ENCODE measurements at regions of chr6 and their contacts with region 1.

Region 1: DNA sequence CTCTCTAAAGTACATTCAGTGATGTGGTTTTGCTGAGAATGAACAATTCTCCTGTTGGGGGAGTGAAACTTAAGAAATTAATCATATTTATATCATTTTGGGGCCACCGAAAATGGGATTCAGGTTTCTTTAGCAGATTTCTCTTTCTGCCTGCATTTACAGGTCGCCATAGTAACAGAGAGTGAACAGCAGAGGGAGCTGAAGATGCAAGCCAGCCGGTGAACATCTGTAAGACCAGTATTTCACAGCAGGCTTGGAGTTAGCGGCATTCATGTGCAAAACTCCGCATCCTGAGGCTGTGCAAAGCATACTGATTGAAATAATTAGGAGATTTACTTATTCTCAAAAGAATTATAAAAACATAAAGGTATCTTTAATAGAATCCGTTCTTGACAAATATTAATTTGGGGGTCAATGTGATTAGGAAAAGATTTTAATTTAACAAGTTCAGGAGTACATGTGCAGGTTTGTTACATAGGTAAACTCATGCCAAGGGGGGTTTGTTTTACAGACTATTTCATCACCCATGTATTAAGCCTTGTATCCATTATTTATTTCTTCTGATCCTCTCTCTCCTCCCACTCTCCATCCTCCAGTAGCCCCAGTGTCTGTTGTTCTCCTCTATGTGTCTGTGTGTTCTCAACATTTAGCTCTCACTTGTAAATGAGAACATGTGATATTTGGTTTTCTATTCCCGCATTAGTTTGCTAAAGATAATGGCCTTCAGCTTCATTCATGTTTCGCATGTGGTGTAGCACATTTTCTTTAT is 17.8 kb upstream of the HSF2 start:
- DNase-seq: peak in 4 of 5 donors; percentile 69 to 89 (median 78)
- H3K4me3 ChIP-seq: no peak overlapping the region
- H3K27ac ChIP-seq: no peak overlapping the region
- H3K4me1 ChIP-seq: no peaks in the 10 kb centered on the region
- H3K27me3 ChIP-seq: no peaks in the 10 kb centered on the region
- CTCF ChIP-seq: peak; percentile 81

Region 2: GRCh38 chr6:122184401-122184827 is 197.3 kb before region 1 on chr6:
- intact Hi-C with region 1: no loop called
- DNase-seq: peak in 2 of 5 donors; percentile 38 to 61
- H3K4me3 ChIP-seq: no peak overlapping the region
- H3K27ac ChIP-seq: no peak overlapping the region
- H3K4me1 ChIP-seq: no peaks in the 10 kb centered on the region
- H3K27me3 ChIP-seq: no peaks in the 10 kb centered on the region
- CTCF ChIP-seq: peak; percentile 22

Region 3: GRCh38 chr6:122471107-122472021 is 89.7 kb after region 1 on chr6 and contains the start of gene SERINC1:
- intact Hi-C with region 1: no loop called
- DNase-seq: peak; percentile 96 to 98 (median 98)
- H3K4me3 ChIP-seq: peak within 1 kb of the TSS; percentile 95 to 100 (median 98)
- H3K27ac ChIP-seq: peak within 1 kb of the TSS; percentile 96
- H3K4me1 ChIP-seq: peaks cover 0 to 6% (median 3%) of the 10 kb centered on the region in 3 donors
- H3K27me3 ChIP-seq: no peaks in the 10 kb centered on the region
- CTCF ChIP-seq: no peak
- total RNA-seq, gene SERINC1: 214 TPM

Region 4: GRCh38 chr6:122520179-122520578 is 138.5 kb after region 1 on chr6:
- intact Hi-C with region 1: loop called (anchors 10 kb)
- DNase-seq: no peak
- H3K4me3 ChIP-seq: no peak overlapping the region
- H3K27ac ChIP-seq: no peak overlapping the region
- H3K4me1 ChIP-seq: no peaks in the 10 kb centered on the region
- H3K27me3 ChIP-seq: no peaks in the 10 kb centered on the region
- CTCF ChIP-seq: no peak